B cell (primary cell): ENCODE measurements at regions of chr14 and their contacts with region 1.

Region 1: DNA sequence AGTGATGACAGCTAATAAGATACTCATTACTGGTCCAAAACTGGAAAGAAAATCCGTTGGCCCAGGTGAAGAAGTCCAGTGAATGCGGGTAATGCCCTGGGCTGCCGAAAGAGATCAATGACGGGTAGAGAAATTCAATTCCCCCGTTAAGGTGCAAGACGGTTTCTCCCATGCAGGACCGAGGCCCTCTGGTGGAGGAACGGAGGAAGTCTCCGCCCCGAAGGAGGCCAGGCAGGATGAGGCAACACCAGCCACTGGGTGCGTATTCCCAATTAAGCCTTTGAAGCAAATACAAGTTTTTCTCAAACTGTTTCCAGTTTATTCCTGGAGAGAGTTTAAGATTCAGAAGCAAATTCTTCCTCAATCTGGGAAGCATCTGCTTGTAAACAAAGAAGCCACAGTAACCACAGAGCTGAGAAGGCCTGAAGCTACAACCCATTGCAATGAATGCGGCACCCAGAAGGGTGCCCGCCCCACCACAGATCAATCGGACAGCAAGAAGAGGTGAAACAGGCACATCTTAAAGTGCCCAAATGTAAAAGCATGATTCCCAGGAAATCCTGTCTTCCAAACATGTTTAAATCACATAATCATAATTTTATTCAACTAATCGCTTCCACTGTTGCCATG is 118.5 kb downstream of the TTC7B start:
- DNase-seq: peak; percentile 71
- ATAC-seq: peak; percentile 70
- H3K4me3 ChIP-seq: peak overlapping the region in 1 of 5 experiments; percentile 34
- H3K4me3 Mint-ChIP-seq: no peak overlapping the region
- H3K27ac ChIP-seq: no peak overlapping the region
- H3K27ac Mint-ChIP-seq: no peak overlapping the region
- H3K4me1 ChIP-seq: peaks cover 0 to 5% of the 10 kb centered on the region in 2 donors
- H3K4me1 Mint-ChIP-seq: peaks cover 5% of the 10 kb centered on the region
- H3K27me3 ChIP-seq: no peaks in the 10 kb centered on the region
- H3K27me3 Mint-ChIP-seq: no peaks in the 10 kb centered on the region
- CTCF ChIP-seq: peak; percentile 86

Region 2: DNA sequence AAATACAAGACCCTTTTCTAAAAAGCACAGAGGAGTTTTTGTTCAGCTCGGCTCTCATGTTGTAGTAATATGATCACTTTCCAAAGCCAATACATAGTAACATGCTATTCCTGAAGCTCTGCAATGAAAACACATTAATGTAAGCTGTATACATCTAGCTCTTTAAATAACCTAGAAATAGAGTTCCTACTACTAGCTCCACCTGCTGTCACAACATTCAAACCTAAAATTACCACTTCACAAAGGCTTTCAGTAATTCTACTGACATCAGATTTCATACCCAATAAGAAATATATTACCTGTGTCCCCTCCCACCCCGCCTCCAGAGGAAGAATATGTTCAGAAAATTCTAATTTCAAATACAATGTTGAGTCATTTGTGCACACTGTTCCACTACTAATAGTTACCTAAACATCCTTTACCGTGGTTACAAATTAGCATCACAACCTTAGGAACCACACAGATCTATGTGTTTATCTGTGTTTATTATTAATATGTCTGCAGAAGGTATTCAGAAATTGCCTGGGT is 761.0 kb before region 1 on chr14:
- CTCF ChIA-PET with region 1: interaction called, 11 read pairs
- POLR2A ChIA-PET with region 1: no interaction called
- intact Hi-C with region 1: no loop called
- DNase-seq: no peak
- ATAC-seq: no peak
- H3K4me3 ChIP-seq: no peak overlapping the region
- H3K4me3 Mint-ChIP-seq: no peak overlapping the region
- H3K27ac ChIP-seq: no peak overlapping the region
- H3K27ac Mint-ChIP-seq: no peak overlapping the region
- H3K4me1 ChIP-seq: no peaks in the 10 kb centered on the region
- H3K4me1 Mint-ChIP-seq: no peaks in the 10 kb centered on the region
- H3K27me3 ChIP-seq: no peaks in the 10 kb centered on the region
- H3K27me3 Mint-ChIP-seq: no peaks in the 10 kb centered on the region
- CTCF ChIP-seq: no peak

Region 3: GRCh38 chr14:89973234-89973823 is 724.4 kb before region 1 on chr14:
- CTCF ChIA-PET with region 1: interaction called, 30 read pairs
- POLR2A ChIA-PET with region 1: no interaction called
- intact Hi-C with region 1: loop called (anchors 10 kb)
- DNase-seq: peak; percentile 55
- ATAC-seq: peak; percentile 41
- H3K4me3 ChIP-seq: no peak overlapping the region
- H3K4me3 Mint-ChIP-seq: no peak overlapping the region
- H3K27ac ChIP-seq: no peak overlapping the region
- H3K27ac Mint-ChIP-seq: no peak overlapping the region
- H3K4me1 ChIP-seq: no peaks in the 10 kb centered on the region
- H3K4me1 Mint-ChIP-seq: no peaks in the 10 kb centered on the region
- H3K27me3 ChIP-seq: no peaks in the 10 kb centered on the region
- H3K27me3 Mint-ChIP-seq: no peaks in the 10 kb centered on the region
- CTCF ChIP-seq: peak; percentile 84

Region 4: DNA sequence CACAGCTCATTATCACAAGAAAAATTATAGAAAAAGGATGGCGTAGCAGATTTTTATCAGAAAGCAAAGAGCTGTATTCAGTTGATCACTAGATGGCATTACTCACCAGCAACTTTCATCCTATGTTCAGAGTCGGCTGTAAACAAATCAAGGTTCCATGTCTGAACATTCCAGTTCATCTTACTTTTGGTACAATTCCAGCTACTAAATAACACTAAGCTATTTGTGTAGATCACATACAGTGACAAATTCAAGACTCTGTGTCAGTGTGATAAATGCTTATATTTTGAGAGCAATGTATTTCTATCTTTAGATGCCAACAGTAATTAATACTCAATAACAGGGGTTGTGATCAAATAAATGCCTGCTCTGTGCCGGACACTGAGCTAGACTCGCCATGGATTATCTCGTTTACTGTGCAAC is 396.0 kb before region 1 on chr14:
- CTCF ChIA-PET with region 1: interaction called, 38 read pairs
- POLR2A ChIA-PET with region 1: no interaction called
- intact Hi-C with region 1: loop called (anchors 1 kb)
- DNase-seq: peak; percentile 22
- ATAC-seq: no peak
- H3K4me3 ChIP-seq: no peak overlapping the region
- H3K4me3 Mint-ChIP-seq: no peak overlapping the region
- H3K27ac ChIP-seq: no peak overlapping the region
- H3K27ac Mint-ChIP-seq: no peak overlapping the region
- H3K4me1 ChIP-seq: no peaks in the 10 kb centered on the region
- H3K4me1 Mint-ChIP-seq: peaks cover 5% of the 10 kb centered on the region
- H3K27me3 ChIP-seq: no peaks in the 10 kb centered on the region
- H3K27me3 Mint-ChIP-seq: no peaks in the 10 kb centered on the region
- CTCF ChIP-seq: peak; percentile 28

Region 5: GRCh38 chr14:90368946-90369721 is 328.6 kb before region 1 on chr14:
- CTCF ChIA-PET with region 1: interaction called, 6 read pairs
- POLR2A ChIA-PET with region 1: no interaction called
- intact Hi-C with region 1: loop called (anchors 1 kb)
- DNase-seq: peak; percentile 27
- ATAC-seq: peak; percentile 51
- H3K4me3 ChIP-seq: no peak overlapping the region
- H3K4me3 Mint-ChIP-seq: no peak overlapping the region
- H3K27ac ChIP-seq: no peak overlapping the region
- H3K27ac Mint-ChIP-seq: no peak overlapping the region
- H3K4me1 ChIP-seq: no peaks in the 10 kb centered on the region
- H3K4me1 Mint-ChIP-seq: no peaks in the 10 kb centered on the region
- H3K27me3 ChIP-seq: no peaks in the 10 kb centered on the region
- H3K27me3 Mint-ChIP-seq: peaks cover 6% of the 10 kb centered on the region
- CTCF ChIP-seq: peak; percentile 53

Region 6: DNA sequence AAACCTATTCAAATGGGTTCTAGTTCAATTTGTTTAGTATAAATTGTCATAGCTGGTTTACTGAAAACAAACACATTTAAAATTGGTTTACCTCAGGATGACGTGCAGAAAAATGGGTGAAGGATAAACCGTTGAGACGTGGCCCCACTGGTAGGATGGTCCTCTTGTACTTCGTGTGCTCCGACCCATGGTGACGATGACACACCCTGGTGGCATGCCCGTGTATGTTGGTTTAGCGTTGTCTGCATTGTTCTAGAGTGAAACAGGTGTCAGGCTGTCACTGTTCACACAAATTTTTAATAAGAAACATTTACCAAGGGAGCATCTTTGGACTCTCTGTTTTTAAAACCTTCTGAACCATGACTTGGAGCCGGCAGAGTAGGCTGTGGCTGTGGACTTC is 292.6 kb before region 1 on chr14:
- CTCF ChIA-PET with region 1: interaction called, 13 read pairs
- POLR2A ChIA-PET with region 1: no interaction called
- intact Hi-C with region 1: no loop called
- DNase-seq: no peak
- ATAC-seq: no peak
- H3K4me3 ChIP-seq: no peak overlapping the region
- H3K4me3 Mint-ChIP-seq: no peak overlapping the region
- H3K27ac ChIP-seq: no peak overlapping the region
- H3K27ac Mint-ChIP-seq: no peak overlapping the region
- H3K4me1 ChIP-seq: peaks cover 20 to 21% of the 10 kb centered on the region in 2 donors
- H3K4me1 Mint-ChIP-seq: peaks cover 26% of the 10 kb centered on the region
- H3K27me3 ChIP-seq: no peaks in the 10 kb centered on the region
- H3K27me3 Mint-ChIP-seq: no peaks in the 10 kb centered on the region
- CTCF ChIP-seq: no peak

Region 7: GRCh38 chr14:90611936-90612335 is 85.8 kb before region 1 on chr14:
- CTCF ChIA-PET with region 1: no interaction called
- POLR2A ChIA-PET with region 1: no interaction called
- intact Hi-C with region 1: no loop called
- DNase-seq: no peak
- ATAC-seq: no peak
- H3K4me3 ChIP-seq: no peak overlapping the region
- H3K4me3 Mint-ChIP-seq: no peak overlapping the region
- H3K27ac ChIP-seq: no peak overlapping the region
- H3K27ac Mint-ChIP-seq: no peak overlapping the region
- H3K4me1 ChIP-seq: no peaks in the 10 kb centered on the region
- H3K4me1 Mint-ChIP-seq: no peaks in the 10 kb centered on the region
- H3K27me3 ChIP-seq: no peaks in the 10 kb centered on the region
- H3K27me3 Mint-ChIP-seq: peaks cover 4% of the 10 kb centered on the region
- CTCF ChIP-seq: no peak

Region 8: DNA sequence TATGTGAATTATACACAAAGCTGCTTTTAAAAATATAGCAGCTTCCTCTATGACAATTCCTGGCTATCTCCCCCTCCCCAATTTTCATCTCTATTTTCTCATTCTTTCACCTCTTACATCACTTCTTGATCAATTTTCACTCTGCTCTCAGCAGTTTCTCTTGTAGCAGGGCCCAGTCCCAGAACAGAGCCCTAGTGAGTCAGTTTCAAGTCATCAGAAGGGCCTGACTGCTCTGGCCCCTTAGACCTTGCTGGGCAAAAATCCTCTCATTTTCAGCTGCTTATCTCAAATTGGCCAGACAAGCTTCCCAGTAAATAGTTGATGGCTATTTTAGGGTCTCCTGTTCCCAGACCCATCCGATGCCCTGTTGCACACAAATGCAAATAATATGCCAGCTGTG is 17.1 kb after region 1 on chr14:
- CTCF ChIA-PET with region 1: interaction called, 10 read pairs
- POLR2A ChIA-PET with region 1: no interaction called
- intact Hi-C with region 1: no loop called
- DNase-seq: no peak
- ATAC-seq: no peak
- H3K4me3 ChIP-seq: no peak overlapping the region
- H3K4me3 Mint-ChIP-seq: no peak overlapping the region
- H3K27ac ChIP-seq: no peak overlapping the region
- H3K27ac Mint-ChIP-seq: no peak overlapping the region
- H3K4me1 ChIP-seq: no peaks in the 10 kb centered on the region
- H3K4me1 Mint-ChIP-seq: no peaks in the 10 kb centered on the region
- H3K27me3 ChIP-seq: peaks cover 0 to 2% (median 0%) of the 10 kb centered on the region in 4 experiments
- H3K27me3 Mint-ChIP-seq: peaks cover 9% of the 10 kb centered on the region
- CTCF ChIP-seq: no peak

Region 9: DNA sequence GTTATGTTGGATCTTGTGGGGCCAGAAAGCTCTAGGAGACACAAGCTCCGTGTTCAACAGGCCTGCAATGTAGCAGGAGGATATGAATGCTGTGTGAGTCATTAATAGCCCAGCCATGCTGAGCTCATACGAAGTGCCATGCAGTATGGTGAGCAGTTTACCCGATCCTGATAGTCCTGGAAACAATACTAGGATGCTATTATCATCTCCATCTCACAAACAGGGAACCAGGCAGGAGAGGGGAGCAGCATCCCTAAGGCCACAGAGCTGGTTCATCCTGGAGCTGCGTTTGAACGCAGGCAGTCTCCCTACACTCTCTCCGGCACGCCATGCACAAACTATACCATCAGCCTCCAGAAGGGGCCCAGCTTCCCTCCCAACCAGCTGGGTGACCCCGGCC is 98.1 kb after region 1 on chr14:
- CTCF ChIA-PET with region 1: no interaction called
- POLR2A ChIA-PET with region 1: no interaction called
- intact Hi-C with region 1: no loop called
- DNase-seq: no peak
- ATAC-seq: no peak
- H3K4me3 ChIP-seq: no peak overlapping the region
- H3K4me3 Mint-ChIP-seq: no peak overlapping the region
- H3K27ac ChIP-seq: no peak overlapping the region
- H3K27ac Mint-ChIP-seq: no peak overlapping the region
- H3K4me1 ChIP-seq: no peaks in the 10 kb centered on the region
- H3K4me1 Mint-ChIP-seq: no peaks in the 10 kb centered on the region
- H3K27me3 ChIP-seq: no peaks in the 10 kb centered on the region
- H3K27me3 Mint-ChIP-seq: peaks cover 13% of the 10 kb centered on the region
- CTCF ChIP-seq: no peak